GM12878 (cell line): ENCODE measurements at regions of chr11 and their contacts with region 1.

Region 1: GRCh38 chr11:65078151-65078550 is 5.7 kb downstream of the CDCA5 start:
- DNase-seq: no peak
- ATAC-seq: peak; percentile 90
- H3K4me3 ChIP-seq: peak overlapping the region; percentile 59
- H3K27ac ChIP-seq: peak overlapping the region; percentile 66
- H3K4me1 ChIP-seq: peaks cover 31% of the 10 kb centered on the region
- H3K27me3 ChIP-seq: no peaks in the 10 kb centered on the region
- CTCF ChIP-seq: peak; percentile 83 to 91 (median 87)
- EP300 ChIP-seq: no peak
- POLR2A ChIP-seq: peak; percentile 44; the same call in 1 of the 2 replicates
- RAD21 ChIP-seq: peak; percentile 70

Region 2: DNA sequence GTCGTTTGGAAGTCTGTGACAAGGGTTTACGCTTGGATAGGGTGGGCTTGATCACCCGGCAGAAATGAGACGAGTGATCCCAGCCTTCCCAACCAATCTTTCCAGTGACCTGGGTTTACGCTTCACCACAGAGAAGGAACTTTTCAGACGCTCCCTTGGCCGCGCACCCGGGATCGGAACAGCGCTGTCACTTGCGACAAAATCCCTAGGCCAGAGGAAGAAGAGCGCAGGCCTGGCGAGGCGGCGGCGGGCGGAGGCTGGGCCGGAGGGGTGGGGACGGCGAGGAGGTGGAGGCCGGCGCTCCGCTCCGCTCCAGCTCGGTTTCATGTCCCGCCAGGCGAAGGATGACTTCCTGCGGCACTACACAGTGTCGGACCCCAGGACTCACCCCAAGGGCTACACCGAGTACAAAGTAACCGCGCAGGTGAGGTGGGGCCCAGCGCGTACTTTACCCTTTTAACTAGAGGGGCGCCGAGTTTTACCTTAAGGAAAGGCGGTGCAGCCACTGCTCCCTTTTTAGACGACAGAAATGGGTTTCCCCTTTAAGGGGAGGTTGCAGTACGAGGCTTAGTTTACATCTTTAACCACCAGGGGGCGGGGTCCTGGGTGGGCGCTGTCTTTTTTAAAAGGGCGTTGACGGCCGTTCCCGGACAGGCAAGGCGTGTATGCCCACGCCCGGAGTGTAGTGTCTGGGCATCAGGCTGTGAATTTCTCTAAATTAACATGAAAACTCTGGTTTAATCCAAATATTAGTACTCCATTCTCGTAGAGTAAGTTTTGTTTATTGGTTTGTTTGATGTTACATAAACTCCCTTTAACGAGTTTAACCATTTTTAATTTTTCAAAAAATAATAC is 50.7 kb before region 1 on chr11 and contains the start of gene SNX15:
- CTCF ChIA-PET with region 1: interaction called, 3 read pairs
- POLR2A ChIA-PET with region 1: interaction called, 6 read pairs
- RAD21 ChIA-PET with region 1: interaction called, 3 read pairs
- SMC1A ChIA-PET with region 1: interaction called, 3 read pairs
- in situ Hi-C with region 1: no loop called
- intact Hi-C with region 1: loop called (anchors 2 kb)
- DNase-seq: peak; percentile 80
- ATAC-seq: peak; percentile 98
- H3K4me3 ChIP-seq: peak within 1 kb of the TSS; percentile 65
- H3K27ac ChIP-seq: peak within 1 kb of the TSS; percentile 74
- H3K4me1 ChIP-seq: peaks cover 8% of the 10 kb centered on the region; the same call in 1 of the 2 replicates
- H3K27me3 ChIP-seq: no peaks in the 10 kb centered on the region
- CTCF ChIP-seq: peak; percentile 29 to 45 (median 37); a peak in 4 of 6 replicates
- EP300 ChIP-seq: no peak
- POLR2A ChIP-seq: peak; percentile 78
- RAD21 ChIP-seq: peak; percentile 28; the same call in 1 of the 2 replicates
- polyA plus RNA-seq, gene SNX15: 2.4 to 3.3 TPM

Region 3: GRCh38 chr11:65040847-65041621 is 37.1 kb before region 1 on chr11 and contains the start of gene SAC3D1:
- CTCF ChIA-PET with region 1: interaction called, 4 read pairs
- POLR2A ChIA-PET with region 1: interaction called, 5 read pairs
- RAD21 ChIA-PET with region 1: interaction called, 8 read pairs
- SMC1A ChIA-PET with region 1: interaction called, 4 read pairs
- in situ Hi-C with region 1: no loop called
- intact Hi-C with region 1: loop called (anchors 5 kb)
- DNase-seq: peak; percentile 86
- ATAC-seq: peak; percentile 98
- H3K4me3 ChIP-seq: peak within 1 kb of the TSS; percentile 81
- H3K27ac ChIP-seq: peak within 1 kb of the TSS; percentile 85
- H3K4me1 ChIP-seq: peaks cover 17% of the 10 kb centered on the region
- H3K27me3 ChIP-seq: no peaks in the 10 kb centered on the region
- CTCF ChIP-seq: no peak
- EP300 ChIP-seq: no peak
- POLR2A ChIP-seq: peak; percentile 71
- RAD21 ChIP-seq: no peak
- polyA plus RNA-seq, gene SAC3D1: 0.16 to 1.7 TPM